Endothelial cell of umbilical vein (primary cell): ENCODE measurements at regions of chrX and their contacts with region 1.

Region 1: GRCh38 chrX:107654872-107655761 is 26.8 kb downstream of the PRPS1 start:
- DNase-seq: peak; percentile 49
- H3K4me3 ChIP-seq: no peak overlapping the region
- H3K27ac ChIP-seq: peak overlapping the region; percentile 45
- H3K4me1 ChIP-seq: peaks cover 6% of the 10 kb centered on the region
- H3K27me3 ChIP-seq: no peaks in the 10 kb centered on the region
- CTCF ChIP-seq: peak; percentile 65 to 74
- POLR2A ChIP-seq: no peak

Region 2: GRCh38 chrX:107272431-107272921 is 382.6 kb before region 1 on chrX:
- CTCF ChIA-PET with region 1: no interaction called
- POLR2A ChIA-PET with region 1: no interaction called
- dilution Hi-C with region 1: no loop called
- intact Hi-C with region 1: no loop called
- DNase-seq: no peak
- H3K4me3 ChIP-seq: no peak overlapping the region
- H3K27ac ChIP-seq: no peak overlapping the region
- H3K4me1 ChIP-seq: no peaks in the 10 kb centered on the region
- H3K27me3 ChIP-seq: no peaks in the 10 kb centered on the region
- CTCF ChIP-seq: no peak
- POLR2A ChIP-seq: no peak

Region 3: DNA sequence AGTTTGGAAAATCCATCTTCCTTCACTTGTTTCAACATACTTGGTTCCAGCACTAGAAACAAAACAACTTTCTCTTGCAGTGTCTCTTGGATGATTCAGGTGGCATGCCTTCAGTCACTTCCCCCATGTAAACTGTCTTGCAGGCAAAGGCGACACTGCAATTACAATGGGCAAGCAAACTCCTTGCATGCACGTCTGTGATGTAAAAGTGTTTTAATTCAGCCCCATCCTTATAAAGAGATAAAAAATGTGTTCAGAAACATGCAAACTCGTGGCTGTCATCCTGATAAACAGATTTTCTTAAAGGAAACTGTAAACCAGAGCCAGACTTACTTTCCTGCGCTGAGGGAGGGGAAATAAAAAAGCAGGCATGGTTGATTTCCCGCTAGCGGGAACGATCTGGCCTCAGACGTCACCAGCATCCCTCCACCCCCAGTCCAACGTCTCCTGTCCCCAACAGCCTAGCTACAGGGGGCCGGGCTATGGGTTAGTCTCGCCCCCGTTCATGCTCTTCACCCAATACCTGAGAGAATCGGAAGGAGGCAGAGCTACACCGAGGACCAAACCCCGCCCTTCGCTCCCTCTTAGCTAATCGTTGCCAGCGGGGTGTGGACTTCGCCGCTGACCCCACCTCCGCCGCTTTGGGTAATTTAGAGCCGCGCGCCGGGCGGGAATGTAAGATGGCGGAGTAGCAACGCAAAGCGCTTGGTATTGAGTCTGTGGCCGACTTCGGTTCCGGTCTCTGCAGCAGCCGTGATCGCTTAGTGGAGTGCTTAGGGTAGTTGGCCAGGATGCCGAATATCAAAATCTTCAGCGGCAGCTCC is 27.1 kb before region 1 on chrX and contains the start of gene PRPS1:
- CTCF ChIA-PET with region 1: interaction called, 18 read pairs
- POLR2A ChIA-PET with region 1: no interaction called
- dilution Hi-C with region 1: no loop called
- intact Hi-C with region 1: loop called (anchors 1 kb)
- DNase-seq: peak; percentile 93
- H3K4me3 ChIP-seq: peak within 1 kb of the TSS; percentile 29 to 75 (median 65)
- H3K27ac ChIP-seq: peak within 1 kb of the TSS; percentile 85
- H3K4me1 ChIP-seq: peaks cover 7% of the 10 kb centered on the region
- H3K27me3 ChIP-seq: no peaks in the 10 kb centered on the region
- CTCF ChIP-seq: no peak
- POLR2A ChIP-seq: peak; percentile 44
- total RNA-seq, gene PRPS1: 36.8 and 38.7 TPM in 2 replicates